Panc1 (cell line): ENCODE measurements at regions of chr17 and their contacts with region 1.

Region 1: DNA sequence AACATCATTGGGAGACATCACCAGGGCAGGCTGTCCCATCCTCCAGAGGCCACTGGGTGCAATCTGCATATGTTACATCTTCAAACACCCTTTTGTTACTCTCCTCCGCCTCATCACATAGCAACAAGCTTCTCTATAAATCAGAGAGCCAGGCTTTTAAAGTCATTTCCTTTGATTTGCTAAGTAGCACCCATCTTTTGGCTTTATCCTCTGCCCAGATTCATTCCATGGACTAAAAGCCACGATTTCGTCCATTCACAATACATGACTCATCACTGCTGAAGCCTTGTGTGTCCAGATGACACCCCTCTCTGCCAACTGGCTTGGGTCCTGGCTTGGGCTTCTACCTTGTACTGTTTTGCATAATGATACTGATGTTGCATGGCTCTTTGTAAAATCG is 2.0 kb upstream of the KRT38 start:
- DNase-seq: no peak
- ATAC-seq: no peak
- H3K4me3 ChIP-seq: no peak overlapping the region
- H3K27ac ChIP-seq: no peak overlapping the region
- H3K4me1 ChIP-seq: no peaks in the 10 kb centered on the region
- H3K27me3 ChIP-seq: no peaks in the 10 kb centered on the region
- CTCF ChIP-seq: no peak

Region 2: DNA sequence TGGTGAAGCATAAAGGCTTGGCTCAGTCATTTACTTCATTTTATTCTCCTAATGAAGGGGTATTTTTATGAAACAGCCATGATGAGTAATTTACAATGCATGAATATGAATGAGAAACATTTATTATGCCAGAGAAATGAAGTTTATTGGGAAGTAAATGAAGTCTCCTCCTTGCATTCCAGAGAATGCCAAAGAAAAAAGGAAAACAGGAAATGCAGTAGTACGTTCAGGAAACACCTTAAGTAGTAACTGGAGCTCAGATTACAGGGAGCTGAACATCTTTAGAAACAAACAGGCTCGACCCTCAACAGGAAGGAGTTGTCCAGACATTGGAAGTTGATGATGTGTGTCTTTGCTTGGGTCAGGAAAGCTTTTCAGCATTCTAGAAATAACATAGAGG is 65.2 kb before region 1 on chr17:
- CTCF ChIA-PET with region 1: no interaction called
- POLR2A ChIA-PET with region 1: no interaction called
- in situ Hi-C with region 1: no loop called
- intact Hi-C with region 1: loop called (anchors 10 kb)
- DNase-seq: no peak
- ATAC-seq: no peak
- H3K4me3 ChIP-seq: no peak overlapping the region
- H3K27ac ChIP-seq: no peak overlapping the region
- H3K4me1 ChIP-seq: no peaks in the 10 kb centered on the region
- H3K27me3 ChIP-seq: no peaks in the 10 kb centered on the region
- CTCF ChIP-seq: no peak

Region 3: DNA sequence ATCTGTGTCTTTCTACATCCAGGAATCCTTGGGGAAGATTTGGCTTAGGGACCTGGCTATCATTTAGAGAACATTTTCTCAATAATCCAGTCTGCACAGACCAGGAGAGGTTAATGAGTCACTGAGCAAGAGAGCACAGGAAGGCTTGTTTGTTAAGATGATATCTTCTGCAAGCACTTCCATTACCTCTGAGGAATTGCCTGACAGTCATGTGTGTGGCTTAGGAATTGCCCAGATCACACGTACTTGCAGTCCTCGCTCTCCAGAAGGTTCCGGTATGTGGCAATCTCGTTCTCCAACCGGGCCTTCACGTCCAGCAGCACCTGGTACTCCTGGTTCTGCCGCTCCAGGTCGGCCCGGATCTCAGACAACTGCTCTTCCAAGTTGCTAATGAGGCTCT is 21.6 kb before region 1 on chr17:
- CTCF ChIA-PET with region 1: no interaction called
- POLR2A ChIA-PET with region 1: interaction called, 11 read pairs
- in situ Hi-C with region 1: no loop called
- intact Hi-C with region 1: no loop called
- DNase-seq: no peak
- ATAC-seq: no peak
- H3K4me3 ChIP-seq: no peak overlapping the region
- H3K27ac ChIP-seq: no peak overlapping the region
- H3K4me1 ChIP-seq: peaks cover 5% of the 10 kb centered on the region; the same call in 1 of the 2 replicates
- H3K27me3 ChIP-seq: no peaks in the 10 kb centered on the region
- CTCF ChIP-seq: no peak

Region 4: DNA sequence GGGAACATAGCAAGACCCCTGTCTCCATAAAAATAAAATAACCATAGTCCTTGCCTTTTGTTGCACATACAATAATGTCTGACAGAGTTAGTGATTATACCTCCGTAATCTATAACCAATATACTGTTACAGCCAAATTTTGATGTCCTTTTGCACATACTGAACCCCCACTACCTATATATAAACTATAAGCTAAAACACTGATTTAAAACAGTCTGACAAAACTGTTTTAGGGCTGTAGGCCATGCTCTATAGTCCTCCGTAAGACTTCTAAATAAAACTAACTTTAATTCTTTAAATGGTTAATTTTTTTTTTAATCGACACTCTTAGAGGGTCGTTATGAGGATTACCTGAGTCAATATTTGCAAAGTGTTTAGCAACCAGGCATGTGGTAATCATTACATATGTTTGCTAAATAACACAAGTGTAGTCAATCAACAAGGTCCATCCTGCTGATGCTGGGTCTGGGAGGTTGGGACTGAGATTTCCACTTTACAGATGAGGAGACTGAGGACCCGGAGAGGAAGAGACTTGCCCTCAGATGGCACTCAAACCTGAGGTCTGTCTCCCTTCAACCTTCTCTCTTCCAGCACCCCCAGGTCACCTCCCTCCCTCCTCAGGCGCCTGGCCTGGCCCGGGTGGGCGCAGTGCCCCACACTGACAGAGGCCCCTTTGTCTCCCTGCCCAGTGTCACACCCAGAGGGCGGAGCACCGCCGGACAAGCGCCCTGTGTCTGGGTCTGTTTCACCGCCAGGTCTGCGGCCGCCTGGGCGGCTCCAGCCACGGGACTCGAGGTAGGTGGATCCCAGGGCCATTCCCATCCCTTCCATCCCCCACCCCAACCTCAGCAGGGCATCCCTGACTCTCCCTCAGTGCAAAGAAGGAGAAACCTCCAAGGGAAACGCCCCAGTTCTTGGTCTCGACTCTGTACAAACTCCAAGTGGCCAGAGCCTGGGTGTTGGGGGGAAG is 645.3 kb after region 1 on chr17:
- CTCF ChIA-PET with region 1: no interaction called
- POLR2A ChIA-PET with region 1: no interaction called
- in situ Hi-C with region 1: no loop called
- intact Hi-C with region 1: no loop called
- DNase-seq: no peak
- ATAC-seq: no peak; the same call in 1 of the 2 replicates
- H3K4me3 ChIP-seq: no peak overlapping the region
- H3K27ac ChIP-seq: no peak overlapping the region
- H3K4me1 ChIP-seq: no peaks in the 10 kb centered on the region
- H3K27me3 ChIP-seq: no peaks in the 10 kb centered on the region
- CTCF ChIP-seq: no peak